ENCODE measurements at regions of chr2 and their contacts with region 1.

Region 1: GRCh38 chr2:201064797-201065329 is 6.6 kb downstream of the HYCC2 start:
- DNase-seq: no peak
- ATAC-seq: no peak

Region 2: GRCh38 chr2:201018636-201019035 is 46.2 kb before region 1 on chr2:
- intact Hi-C with region 1: loop called (anchors 5 kb)
- DNase-seq: no peak
- ATAC-seq: no peak

Region 3: DNA sequence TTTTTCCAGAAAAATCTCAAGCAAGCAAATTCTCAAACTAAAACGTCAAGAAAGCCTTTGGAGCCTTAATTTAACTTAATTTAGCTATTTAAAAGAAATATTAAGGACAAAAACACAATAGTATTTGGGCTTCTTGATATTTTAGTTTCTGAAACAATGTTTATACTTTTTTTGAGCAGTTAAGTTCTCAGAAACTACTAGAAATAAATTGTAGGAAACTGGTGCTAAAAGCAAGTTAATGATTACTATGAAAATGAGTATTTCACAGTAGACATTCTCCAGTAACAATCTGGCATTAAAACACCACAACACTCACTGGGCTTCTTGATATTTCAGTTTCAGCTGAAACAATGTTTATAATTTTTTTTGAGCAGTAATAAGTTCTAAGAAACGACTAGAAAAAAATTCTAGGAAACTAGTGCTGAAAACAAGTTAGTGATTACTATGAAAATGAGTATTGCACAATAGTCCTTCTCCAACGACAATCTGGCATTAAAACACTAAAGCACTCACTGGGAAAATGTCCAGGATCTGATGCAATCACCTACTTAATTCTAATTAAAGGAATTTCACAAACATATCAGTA is 341.3 kb after region 1 on chr2:
- intact Hi-C with region 1: no loop called
- DNase-seq: no peak
- ATAC-seq: peak; percentile 55

Region 4: GRCh38 chr2:202317080-202317857 is 1252.4 kb after region 1 on chr2:
- intact Hi-C with region 1: no loop called
- DNase-seq: no peak
- ATAC-seq: peak; percentile 81